HCT116 (cell line): ENCODE measurements at regions of chr15 and their contacts with region 1.

Region 1: GRCh38 chr15:92979011-92979701 is 79.0 kb downstream of the CHD2 start:
- DNase-seq: no peak
- ATAC-seq: no peak
- H3K4me3 ChIP-seq: no peak overlapping the region
- H3K27ac ChIP-seq: no peak overlapping the region
- H3K4me1 ChIP-seq: peaks cover 0 to 30% of the 10 kb centered on the region in 2 experiments; a peak in 1 of 4 replicates
- H3K27me3 ChIP-seq: no peaks in the 10 kb centered on the region
- CTCF ChIP-seq: no peak
- POLR2A ChIP-seq: no peak
- RAD21 ChIP-seq: no peak

Region 2: DNA sequence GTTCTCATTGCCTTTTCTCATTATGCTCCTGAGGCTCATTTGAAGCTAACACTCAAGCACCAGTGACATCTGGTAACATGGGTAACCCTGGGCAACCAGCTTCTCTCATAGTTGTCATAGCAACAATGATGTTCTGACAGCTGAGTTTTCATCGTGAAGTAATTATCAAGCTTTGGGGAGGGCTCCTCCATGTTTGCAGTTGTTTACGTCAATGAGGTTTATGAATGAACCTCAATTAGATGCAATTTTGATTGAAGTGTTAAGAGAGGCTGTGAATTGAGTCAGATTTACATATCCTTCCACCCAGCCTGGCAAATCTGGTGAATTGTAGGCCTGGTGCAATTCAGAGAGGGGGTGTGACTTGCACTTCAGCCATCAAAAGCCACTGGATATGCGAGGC is 198.3 kb before region 1 on chr15:
- CTCF ChIA-PET with region 1: no interaction called
- POLR2A ChIA-PET with region 1: no interaction called
- RAD21 ChIA-PET with region 1: no interaction called
- intact Hi-C with region 1: no loop called
- DNase-seq: no peak
- ATAC-seq: no peak
- H3K4me3 ChIP-seq: no peak overlapping the region
- H3K27ac ChIP-seq: no peak overlapping the region
- H3K4me1 ChIP-seq: no peaks in the 10 kb centered on the region
- H3K27me3 ChIP-seq: no peaks in the 10 kb centered on the region
- CTCF ChIP-seq: no peak
- POLR2A ChIP-seq: no peak
- RAD21 ChIP-seq: no peak

Region 3: GRCh38 chr15:92990031-92990430 is 10.9 kb after region 1 on chr15:
- CTCF ChIA-PET with region 1: no interaction called
- POLR2A ChIA-PET with region 1: no interaction called
- RAD21 ChIA-PET with region 1: no interaction called
- intact Hi-C with region 1: loop called (anchors 2 kb)
- DNase-seq: no peak
- ATAC-seq: no peak
- H3K4me3 ChIP-seq: no peak overlapping the region
- H3K27ac ChIP-seq: no peak overlapping the region
- H3K4me1 ChIP-seq: no peaks in the 10 kb centered on the region
- H3K27me3 ChIP-seq: no peaks in the 10 kb centered on the region
- CTCF ChIP-seq: no peak
- POLR2A ChIP-seq: no peak
- RAD21 ChIP-seq: no peak

Region 4: GRCh38 chr15:93030430-93031105 is 51.4 kb after region 1 on chr15:
- CTCF ChIA-PET with region 1: no interaction called
- POLR2A ChIA-PET with region 1: no interaction called
- RAD21 ChIA-PET with region 1: no interaction called
- intact Hi-C with region 1: no loop called
- DNase-seq: peak; percentile 48
- ATAC-seq: peak; percentile 91
- H3K4me3 ChIP-seq: no peak overlapping the region
- H3K27ac ChIP-seq: no peak overlapping the region
- H3K4me1 ChIP-seq: peaks cover 0 to under 1% of the 10 kb centered on the region in 2 experiments; a peak in 1 of 4 replicates
- H3K27me3 ChIP-seq: no peaks in the 10 kb centered on the region
- CTCF ChIP-seq: peak; percentile 75 to 85 (median 80); a peak in 5 of 6 replicates
- POLR2A ChIP-seq: no peak
- RAD21 ChIP-seq: peak; percentile 89